GM12878 (cell line): ENCODE measurements at regions of chr19 and their contacts with region 1.

Region 1: GRCh38 chr19:18675779-18676178 is 7.7 kb upstream of the CRTC1 start:
- DNase-seq: no peak
- ATAC-seq: peak; percentile 49
- H3K4me3 ChIP-seq: no peak overlapping the region
- H3K27ac ChIP-seq: no peak overlapping the region
- H3K4me1 ChIP-seq: no peaks in the 10 kb centered on the region; the same call in 1 of the 2 replicates
- H3K27me3 ChIP-seq: no peaks in the 10 kb centered on the region
- CTCF ChIP-seq: peak; percentile 49 to 60 (median 51); a peak in 5 of 6 replicates
- EP300 ChIP-seq: no peak
- POLR2A ChIP-seq: no peak
- RAD21 ChIP-seq: peak; percentile 75

Region 2: DNA sequence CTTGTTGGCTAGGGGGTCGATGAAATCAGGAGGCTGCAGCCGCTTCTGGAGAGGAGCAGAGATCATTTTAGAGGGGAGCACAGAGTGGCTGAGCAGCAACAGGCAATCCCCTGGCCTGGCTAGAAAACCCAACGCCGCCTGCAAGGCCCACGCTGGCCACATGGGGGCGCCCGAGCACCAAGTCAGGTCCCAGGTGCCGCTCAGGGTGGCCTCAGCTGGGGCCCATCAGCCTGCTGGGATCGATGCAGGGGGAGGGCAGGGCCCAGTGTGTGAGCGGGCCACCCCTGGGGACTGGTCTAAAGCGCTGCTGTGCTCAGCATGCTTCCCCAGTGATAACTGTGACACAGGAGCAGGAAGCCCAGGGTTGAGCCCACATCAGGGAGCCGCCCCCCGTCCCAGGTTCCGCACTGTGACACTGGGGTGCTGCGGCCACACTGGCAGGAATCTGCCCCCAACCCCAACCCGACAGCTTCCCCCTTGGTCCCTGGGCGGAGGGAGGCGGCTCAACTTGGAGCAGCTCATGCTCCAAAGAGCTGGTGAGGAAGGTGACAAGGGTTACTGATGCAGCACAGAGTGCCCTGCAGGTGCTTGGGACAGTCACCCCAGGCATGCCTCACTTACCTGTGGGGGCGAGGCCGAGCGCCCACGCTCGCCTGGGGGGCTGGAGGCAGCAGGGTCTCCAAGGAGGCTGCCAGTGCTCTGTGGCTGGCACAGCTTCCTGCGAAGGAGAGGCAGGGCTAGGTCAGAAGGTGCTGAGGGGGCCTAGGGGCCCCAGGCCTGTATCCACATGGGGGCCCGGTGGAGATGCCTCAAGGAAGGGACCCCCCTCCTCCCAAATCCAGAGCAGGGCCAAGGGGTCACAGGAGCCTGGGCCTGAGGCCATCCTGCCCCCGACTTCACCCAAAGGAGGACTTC is 224.6 kb before region 1 on chr19:
- CTCF ChIA-PET with region 1: interaction called, 8 read pairs
- POLR2A ChIA-PET with region 1: no interaction called
- RAD21 ChIA-PET with region 1: interaction called, 4 read pairs
- SMC1A ChIA-PET with region 1: no interaction called
- in situ Hi-C with region 1: loop called (anchors 10 kb)
- intact Hi-C with region 1: loop called (anchors 1 kb)
- DNase-seq: no peak
- ATAC-seq: peak; percentile 98
- H3K4me3 ChIP-seq: no peak overlapping the region
- H3K27ac ChIP-seq: no peak overlapping the region
- H3K4me1 ChIP-seq: no peaks in the 10 kb centered on the region
- H3K27me3 ChIP-seq: no peaks in the 10 kb centered on the region
- CTCF ChIP-seq: peak; percentile 95 to 98 (median 98)
- EP300 ChIP-seq: no peak
- POLR2A ChIP-seq: peak; percentile 7; the same call in 1 of the 2 replicates
- RAD21 ChIP-seq: peak; percentile 91

Region 3: GRCh38 chr19:18538115-18538514 is 137.7 kb before region 1 on chr19:
- CTCF ChIA-PET with region 1: no interaction called
- POLR2A ChIA-PET with region 1: no interaction called
- RAD21 ChIA-PET with region 1: no interaction called
- SMC1A ChIA-PET with region 1: no interaction called
- in situ Hi-C with region 1: no loop called
- intact Hi-C with region 1: no loop called
- DNase-seq: no peak
- ATAC-seq: no peak
- H3K4me3 ChIP-seq: no peak overlapping the region
- H3K27ac ChIP-seq: no peak overlapping the region
- H3K4me1 ChIP-seq: peaks cover 10% of the 10 kb centered on the region
- H3K27me3 ChIP-seq: no peaks in the 10 kb centered on the region
- CTCF ChIP-seq: no peak
- EP300 ChIP-seq: no peak
- POLR2A ChIP-seq: no peak; the same call in 1 of the 2 replicates
- RAD21 ChIP-seq: no peak

Region 4: DNA sequence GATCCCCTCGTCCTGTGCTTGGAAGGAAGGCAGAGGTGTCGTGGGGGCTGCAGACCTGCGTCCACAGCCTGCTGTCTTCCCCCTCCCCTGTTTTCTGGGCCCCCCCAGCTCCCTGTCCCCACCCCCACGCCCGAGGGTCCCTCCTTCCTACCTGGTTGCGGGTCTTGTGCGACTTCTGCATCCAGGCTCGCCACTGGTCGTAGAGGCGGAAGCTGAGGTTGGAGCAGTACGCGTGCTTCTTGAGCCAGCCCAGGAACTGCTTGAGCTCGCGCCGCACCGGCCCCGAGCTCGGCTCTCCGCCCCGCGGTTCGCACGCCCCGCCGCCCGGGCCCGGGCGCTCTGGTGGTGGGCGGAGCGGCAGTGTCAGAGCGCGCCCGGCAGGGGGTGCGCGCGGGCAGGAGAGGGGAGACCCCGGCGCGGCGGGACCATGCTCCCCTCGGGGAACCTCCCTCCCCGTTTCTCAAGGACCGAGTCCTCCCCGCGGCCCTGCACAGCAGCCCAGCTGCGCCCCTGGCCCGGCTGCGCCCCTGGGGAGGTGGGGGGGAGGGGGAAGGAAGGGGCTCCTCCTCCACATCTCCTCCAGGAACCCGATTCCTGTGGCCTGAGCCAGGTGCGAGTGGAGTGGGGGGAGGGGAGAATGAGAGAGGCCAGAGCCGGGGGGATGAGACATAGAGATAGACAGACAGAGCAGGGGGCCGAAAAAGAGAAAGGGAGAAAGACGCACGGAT is 81.5 kb before region 1 on chr19:
- CTCF ChIA-PET with region 1: interaction called, 5 read pairs
- POLR2A ChIA-PET with region 1: no interaction called
- RAD21 ChIA-PET with region 1: interaction called, 4 read pairs
- SMC1A ChIA-PET with region 1: interaction called, 3 read pairs
- in situ Hi-C with region 1: no loop called
- intact Hi-C with region 1: loop called (anchors 2 kb)
- DNase-seq: no peak
- ATAC-seq: peak; percentile 81
- H3K4me3 ChIP-seq: peak overlapping the region; percentile 67
- H3K27ac ChIP-seq: no peak overlapping the region
- H3K4me1 ChIP-seq: peaks cover 15% of the 10 kb centered on the region
- H3K27me3 ChIP-seq: peaks cover 2% of the 10 kb centered on the region in 2 experiments; a peak in 1 of 4 replicates
- CTCF ChIP-seq: peak; percentile 66 to 88 (median 81)
- EP300 ChIP-seq: no peak
- POLR2A ChIP-seq: no peak; the same call in none of the 2 replicates
- RAD21 ChIP-seq: peak; percentile 74

Region 5: DNA sequence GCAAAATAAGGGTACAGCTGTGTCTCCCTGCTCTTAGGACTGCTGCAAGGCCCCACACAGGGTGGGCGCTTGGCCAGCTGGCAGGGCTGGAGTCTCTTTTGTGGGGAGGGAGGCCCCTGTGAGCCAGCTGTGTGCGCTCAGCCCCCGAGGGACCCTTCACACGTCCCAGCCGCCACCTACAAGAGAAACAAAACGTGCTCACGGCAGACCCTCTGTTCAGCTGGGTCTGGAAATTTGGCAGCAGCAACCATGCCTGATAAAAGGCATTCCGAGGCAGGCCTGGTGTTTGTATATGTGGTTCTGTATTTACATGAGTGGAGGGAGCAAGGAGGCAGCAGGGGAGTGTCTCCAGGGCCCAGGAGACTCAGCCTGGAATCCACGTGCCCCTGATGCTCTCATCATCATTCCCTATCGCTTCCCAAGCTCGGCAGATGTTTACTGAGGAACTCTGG is 57.4 kb after region 1 on chr19:
- CTCF ChIA-PET with region 1: no interaction called
- POLR2A ChIA-PET with region 1: no interaction called
- RAD21 ChIA-PET with region 1: no interaction called
- SMC1A ChIA-PET with region 1: no interaction called
- in situ Hi-C with region 1: no loop called
- intact Hi-C with region 1: no loop called
- DNase-seq: no peak
- ATAC-seq: no peak
- H3K4me3 ChIP-seq: no peak overlapping the region
- H3K27ac ChIP-seq: no peak overlapping the region
- H3K4me1 ChIP-seq: no peaks in the 10 kb centered on the region
- H3K27me3 ChIP-seq: no peaks in the 10 kb centered on the region
- CTCF ChIP-seq: no peak
- EP300 ChIP-seq: no peak
- POLR2A ChIP-seq: no peak
- RAD21 ChIP-seq: no peak